ENCODE measurements at regions of chr15 and their contacts with region 1.

Region 1: DNA sequence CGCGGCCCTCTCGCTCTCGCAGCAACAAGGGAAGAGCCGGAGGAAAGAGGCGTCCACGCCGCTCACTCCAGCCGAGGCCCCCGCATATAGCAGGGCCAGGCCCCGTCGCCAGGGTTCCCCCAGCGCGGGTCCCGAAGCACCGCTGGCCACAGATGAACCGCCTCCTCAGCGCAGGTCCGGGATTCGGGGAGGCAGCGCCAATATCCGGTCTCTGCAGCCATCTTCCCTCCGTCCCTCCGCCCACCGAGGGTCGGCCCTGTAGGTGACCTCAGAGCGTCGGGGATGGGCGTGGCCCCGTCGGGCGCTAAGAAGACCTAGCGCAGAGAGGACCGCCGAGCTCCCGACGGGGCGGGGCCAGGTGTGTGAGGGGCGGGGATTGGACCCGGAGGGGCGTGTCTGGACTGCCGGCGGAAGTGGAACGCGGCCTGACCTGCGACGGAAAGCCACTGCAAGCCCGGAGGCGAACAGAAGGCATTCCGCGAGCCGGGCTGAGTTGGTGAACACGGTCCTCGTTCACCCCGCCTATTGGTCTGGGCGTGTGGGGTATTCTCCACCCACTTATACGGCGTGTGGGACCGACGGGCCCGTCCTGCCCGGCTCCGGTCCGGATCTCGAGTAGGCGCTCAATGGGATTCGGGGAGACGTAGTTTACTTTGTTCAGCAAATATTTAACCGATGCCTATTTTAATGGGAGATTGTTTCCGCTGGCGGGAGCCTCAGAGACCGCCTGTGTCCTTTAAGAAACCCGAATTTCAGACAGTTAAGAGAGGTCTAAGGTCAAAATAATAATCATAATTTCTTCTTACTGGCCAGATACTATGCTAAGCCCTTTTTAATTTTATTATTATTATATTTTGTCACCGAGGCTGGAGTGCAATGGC is 26.9 kb upstream of the MTHFS start:
- DNase-seq: peak; percentile 95
- ATAC-seq: peak; percentile 95
- H3K4me3 ChIP-seq: peak overlapping the region; percentile 92 to 94
- H3K27ac ChIP-seq: peak overlapping the region; percentile 97
- H3K4me1 ChIP-seq: peaks cover 10 to 16% of the 10 kb centered on the region in 2 experiments; a peak in 3 of 4 replicates
- H3K27me3 ChIP-seq: no peaks in the 10 kb centered on the region
- CTCF ChIP-seq: no peak
- POLR2A ChIP-seq: peak; percentile 93
- RAD21 ChIP-seq: no peak

Region 2: GRCh38 chr15:79765028-79765546 is 158.7 kb before region 1 on chr15:
- CTCF ChIA-PET with region 1: no interaction called
- POLR2A ChIA-PET with region 1: no interaction called
- RAD21 ChIA-PET with region 1: no interaction called
- intact Hi-C with region 1: no loop called
- DNase-seq: no peak
- ATAC-seq: no peak
- H3K4me3 ChIP-seq: no peak overlapping the region
- H3K27ac ChIP-seq: no peak overlapping the region
- H3K4me1 ChIP-seq: no peaks in the 10 kb centered on the region
- H3K27me3 ChIP-seq: peaks cover 27% of the 10 kb centered on the region
- CTCF ChIP-seq: no peak
- POLR2A ChIP-seq: no peak
- RAD21 ChIP-seq: no peak

Region 3: DNA sequence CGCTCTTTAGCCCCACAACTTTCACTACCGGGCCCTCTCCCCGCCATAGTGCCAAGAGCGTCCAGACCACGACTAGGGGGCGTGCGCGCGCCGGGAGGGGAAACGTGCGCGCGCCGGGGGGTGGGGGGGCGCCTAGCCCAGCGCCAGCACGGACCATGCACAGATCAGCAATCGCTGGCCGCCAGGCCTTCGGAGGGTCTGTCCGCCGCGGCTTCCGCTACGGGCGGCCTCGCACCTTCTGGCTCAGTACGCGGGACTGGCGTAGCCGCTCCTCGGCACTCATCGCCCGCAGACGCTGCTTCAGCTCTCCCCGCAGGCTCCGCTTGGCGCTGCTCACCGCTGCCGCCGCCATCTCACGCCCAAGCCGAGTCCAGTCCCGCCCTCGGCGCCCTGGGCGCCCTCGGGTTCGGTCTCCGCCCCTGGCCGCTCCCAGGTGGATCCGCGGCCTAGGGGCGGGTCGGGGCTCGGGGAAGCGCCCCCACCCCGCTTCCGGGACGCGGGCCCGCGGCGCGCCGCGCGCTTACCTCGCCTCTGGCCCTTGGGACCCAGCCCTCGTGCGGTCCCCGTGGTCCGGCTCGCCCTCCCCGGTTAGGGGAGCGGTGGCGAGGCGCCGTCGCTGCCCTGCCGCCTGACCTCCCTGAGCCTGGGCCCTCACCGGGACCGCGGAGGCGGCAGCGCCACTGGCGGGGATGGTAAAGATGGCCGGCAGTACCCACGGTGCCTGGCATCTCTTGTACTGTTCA is 26.9 kb before region 1 on chr15 and contains the start of gene MTHFS:
- CTCF ChIA-PET with region 1: interaction called, 4 read pairs
- POLR2A ChIA-PET with region 1: interaction called, 15 read pairs
- RAD21 ChIA-PET with region 1: interaction called in 1 of 2 experiments, 3 read pairs
- intact Hi-C with region 1: no loop called
- DNase-seq: peak; percentile 63
- ATAC-seq: peak; percentile 95
- H3K4me3 ChIP-seq: peak within 1 kb of the TSS; percentile 81 to 90
- H3K27ac ChIP-seq: peak within 1 kb of the TSS; percentile 93
- H3K4me1 ChIP-seq: peaks cover 0 to 17% of the 10 kb centered on the region in 2 experiments; a peak in 2 of 4 replicates
- H3K27me3 ChIP-seq: no peaks in the 10 kb centered on the region
- CTCF ChIP-seq: peak; percentile 18 to 49 (median 36); a peak in 3 of 6 replicates
- POLR2A ChIP-seq: peak; percentile 91
- RAD21 ChIP-seq: peak; percentile 37; the same call in 1 of the 2 replicates
- total RNA-seq, gene MTHFS: 30.5 TPM